ENCODE measurements at regions of chr17 and their contacts with region 1.

Region 1: GRCh38 chr17:1390433-1391367 is 9.3 kb downstream of the YWHAE start:
- H3K4me3 ChIP-seq: no peak overlapping the region
- H3K27ac ChIP-seq: peak overlapping the region; percentile 75
- H3K4me1 ChIP-seq: peaks cover 70% of the 10 kb centered on the region
- CTCF ChIP-seq: no peak

Region 2: DNA sequence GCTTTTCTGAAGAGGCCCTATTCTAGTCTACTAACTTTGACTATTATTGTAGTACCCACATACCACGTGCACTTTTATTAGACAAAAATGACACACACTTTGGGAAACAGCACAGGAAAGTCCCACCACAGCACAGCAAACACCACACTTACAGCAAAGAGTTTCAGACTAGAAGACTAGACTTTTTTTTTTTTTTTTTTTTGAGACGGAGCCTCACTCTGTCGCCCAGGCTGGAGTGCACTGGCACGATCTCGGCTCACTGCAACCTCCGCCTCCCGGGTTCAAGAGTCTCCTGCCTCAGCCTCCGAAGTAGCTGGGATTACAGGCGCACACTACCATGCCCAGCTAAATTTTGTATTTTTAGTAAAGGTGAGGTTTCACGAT is 10.8 kb before region 1 on chr17:
- CTCF ChIA-PET with region 1: interaction called, 4 read pairs
- POLR2A ChIA-PET with region 1: interaction called, 12 read pairs
- H3K4me3 ChIP-seq: no peak overlapping the region
- H3K27ac ChIP-seq: peak overlapping the region; percentile 1
- H3K4me1 ChIP-seq: peaks cover 68% of the 10 kb centered on the region
- CTCF ChIP-seq: no peak